Heart right ventricle (tissue), 16 donors: ENCODE measurements at regions of chr9 and their contacts with region 1.

Region 1: GRCh38 chr9:110152704-110153374 is 55.1 kb downstream of the C9orf152 start:
- DNase-seq: no peak
- ATAC-seq: peak in 7 of 8 donors; percentile 16 to 38 (median 25)
- H3K4me3 ChIP-seq: no peak overlapping the region
- H3K27ac ChIP-seq: peak overlapping the region in 5 of 10 donors; percentile 2 to 45 (median 28)
- H3K4me1 ChIP-seq: peaks cover 20 to 100% (median 96%) of the 10 kb centered on the region in 9 donors
- H3K27me3 ChIP-seq: no peaks in the 10 kb centered on the region
- CTCF ChIP-seq: peak; percentile 45 to 84 (median 74)

Region 2: GRCh38 chr9:109903515-109904138 is 249.2 kb before region 1 on chr9:
- intact Hi-C with region 1: loop called in 8 of 10 experiments (anchors 2 to 5 kb)
- DNase-seq: peak; percentile 28 to 82
- ATAC-seq: peak in 6 of 8 donors; percentile 36 to 56 (median 40)
- H3K4me3 ChIP-seq: no peak overlapping the region
- H3K27ac ChIP-seq: peak overlapping the region in 1 of 10 donors; percentile 16
- H3K4me1 ChIP-seq: peaks cover 0 to 76% (median 35%) of the 10 kb centered on the region in 9 donors
- H3K27me3 ChIP-seq: no peaks in the 10 kb centered on the region
- CTCF ChIP-seq: peak; percentile 46 to 93 (median 84)

Region 3: GRCh38 chr9:110048403-110048975 is 104.3 kb before region 1 on chr9:
- intact Hi-C with region 1: loop called in 2 of 10 experiments (anchors 5 to 10 kb)
- DNase-seq: peak; percentile 85 to 86
- ATAC-seq: peak; percentile 93 to 96 (median 95)
- H3K4me3 ChIP-seq: peak overlapping the region; percentile 58 to 92 (median 86)
- H3K27ac ChIP-seq: peak overlapping the region; percentile 41 to 91 (median 85)
- H3K4me1 ChIP-seq: peaks cover 0 to 59% (median 47%) of the 10 kb centered on the region in 9 donors
- H3K27me3 ChIP-seq: peaks cover 0 to 11% (median 0%) of the 10 kb centered on the region in 7 donors
- CTCF ChIP-seq: no peak

Region 4: GRCh38 chr9:110058304-110058953 is 94.4 kb before region 1 on chr9:
- intact Hi-C with region 1: loop called in 3 of 10 experiments (anchors 5 to 10 kb)
- DNase-seq: peak; percentile 29 to 56
- ATAC-seq: peak; percentile 41 to 73 (median 70)
- H3K4me3 ChIP-seq: no peak overlapping the region
- H3K27ac ChIP-seq: peak overlapping the region in 4 of 10 donors; percentile 29 to 69 (median 40)
- H3K4me1 ChIP-seq: peaks cover 4 to 87% (median 42%) of the 10 kb centered on the region in 9 donors
- H3K27me3 ChIP-seq: no peaks in the 10 kb centered on the region
- CTCF ChIP-seq: peak in 8 of 9 donors; percentile 28 to 67 (median 57)

Region 5: DNA sequence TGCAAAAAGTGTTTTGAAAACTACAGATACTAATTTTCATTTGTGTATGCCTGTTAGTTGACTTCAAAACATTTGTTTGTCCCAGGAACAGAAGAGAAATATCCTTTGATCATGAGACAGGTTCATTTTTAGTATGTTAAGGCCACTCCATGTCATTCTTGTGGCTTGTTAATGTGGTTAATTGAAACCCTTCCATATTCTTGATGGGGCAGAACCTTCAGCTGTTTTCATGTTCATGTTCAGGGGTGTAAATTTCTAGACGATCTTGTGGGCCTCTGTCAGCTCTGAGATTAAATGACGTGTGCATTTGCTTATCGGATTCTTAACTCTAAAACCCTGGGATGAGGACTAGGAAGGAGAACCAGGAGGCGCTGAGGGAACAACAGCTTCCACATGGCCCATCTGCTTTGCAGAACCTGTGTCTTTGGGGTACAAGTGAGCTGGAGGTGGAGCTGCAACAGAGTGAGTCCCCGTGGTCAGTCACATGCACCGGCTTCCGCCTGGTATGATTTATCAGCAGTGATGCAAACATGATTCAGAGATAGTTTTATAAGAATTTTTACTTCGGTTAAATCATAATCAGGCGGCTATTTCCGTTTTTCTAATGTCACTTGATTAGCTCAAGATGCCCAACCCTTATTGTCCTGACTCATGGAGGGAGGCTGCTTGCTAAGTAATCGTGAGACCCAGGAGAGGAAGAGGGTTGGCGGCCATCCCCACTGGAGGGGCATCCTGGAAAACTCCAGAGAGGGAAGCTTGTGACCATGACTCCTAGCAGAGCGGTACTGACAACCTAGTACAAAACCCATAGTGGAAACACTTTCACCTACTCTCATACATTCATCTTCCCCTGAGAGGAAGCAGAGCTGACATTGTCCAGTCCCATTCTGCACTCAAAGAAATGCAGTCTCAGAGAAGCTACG is 83.3 kb before region 1 on chr9:
- intact Hi-C with region 1: loop called in 4 of 10 experiments (anchors 5 to 10 kb)
- DNase-seq: peak; percentile 30 to 64
- ATAC-seq: peak; percentile 35 to 86 (median 70)
- H3K4me3 ChIP-seq: no peak overlapping the region
- H3K27ac ChIP-seq: peak overlapping the region in 9 of 10 donors; percentile 12 to 76 (median 56)
- H3K4me1 ChIP-seq: peaks cover 6 to 100% (median 86%) of the 10 kb centered on the region in 9 donors
- H3K27me3 ChIP-seq: no peaks in the 10 kb centered on the region
- CTCF ChIP-seq: no peak

Region 6: DNA sequence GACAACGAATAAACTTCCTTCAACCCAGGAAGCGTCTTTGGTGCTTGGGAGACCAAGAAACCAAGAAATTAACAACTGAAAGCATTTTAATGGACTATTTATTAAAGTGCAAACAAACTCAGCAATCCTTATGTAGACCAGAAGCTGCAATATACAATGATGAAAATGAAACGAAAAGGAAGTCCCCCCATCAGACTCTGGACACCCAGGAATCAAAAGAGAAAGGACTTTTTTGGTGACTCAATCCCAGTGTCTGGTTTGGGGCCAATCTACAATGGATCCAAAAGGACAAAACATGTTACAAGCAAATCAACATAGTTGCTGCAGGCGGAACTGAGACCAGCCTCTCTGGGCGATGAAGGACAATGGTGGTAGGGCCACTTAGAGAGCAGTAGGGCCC is 15.6 kb after region 1 on chr9:
- intact Hi-C with region 1: no loop called
- DNase-seq: no peak
- ATAC-seq: no peak
- H3K4me3 ChIP-seq: no peak overlapping the region
- H3K27ac ChIP-seq: peak overlapping the region in 1 of 10 donors; percentile 10
- H3K4me1 ChIP-seq: peaks cover 3 to 55% (median 28%) of the 10 kb centered on the region in 9 donors
- H3K27me3 ChIP-seq: no peaks in the 10 kb centered on the region
- CTCF ChIP-seq: no peak

Region 7: DNA sequence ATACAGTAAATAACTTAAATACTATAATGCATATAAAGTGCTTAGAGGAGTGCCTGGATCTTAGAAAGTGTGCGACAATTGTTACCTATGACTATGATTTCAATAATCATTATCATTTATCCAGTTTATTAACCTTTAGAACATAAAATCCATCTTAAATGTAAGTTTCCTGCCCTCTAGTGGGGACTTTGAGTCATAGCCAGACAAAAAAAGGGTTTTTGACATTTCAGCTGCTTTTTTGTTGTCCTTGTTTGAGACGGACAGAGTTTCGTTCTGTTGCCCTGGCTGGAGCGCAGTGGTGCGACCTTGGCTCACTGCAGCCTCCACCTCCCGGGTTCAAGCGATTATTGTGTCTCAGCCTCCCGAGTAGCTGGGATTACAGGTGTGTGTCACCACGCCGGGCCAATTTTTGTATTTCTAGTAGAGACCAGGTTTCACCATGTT is 64.8 kb after region 1 on chr9:
- intact Hi-C with region 1: loop called in 1 of 10 experiments (anchors 10 kb)
- DNase-seq: no peak
- ATAC-seq: no peak
- H3K4me3 ChIP-seq: no peak overlapping the region
- H3K27ac ChIP-seq: no peak overlapping the region
- H3K4me1 ChIP-seq: peaks cover 0 to 12% (median 0%) of the 10 kb centered on the region in 9 donors
- H3K27me3 ChIP-seq: no peaks in the 10 kb centered on the region
- CTCF ChIP-seq: peak; percentile 56 to 88 (median 79)